Pancreas (tissue), 10 donors: ENCODE measurements at regions of chr14 and their contacts with region 1.

Region 1: DNA sequence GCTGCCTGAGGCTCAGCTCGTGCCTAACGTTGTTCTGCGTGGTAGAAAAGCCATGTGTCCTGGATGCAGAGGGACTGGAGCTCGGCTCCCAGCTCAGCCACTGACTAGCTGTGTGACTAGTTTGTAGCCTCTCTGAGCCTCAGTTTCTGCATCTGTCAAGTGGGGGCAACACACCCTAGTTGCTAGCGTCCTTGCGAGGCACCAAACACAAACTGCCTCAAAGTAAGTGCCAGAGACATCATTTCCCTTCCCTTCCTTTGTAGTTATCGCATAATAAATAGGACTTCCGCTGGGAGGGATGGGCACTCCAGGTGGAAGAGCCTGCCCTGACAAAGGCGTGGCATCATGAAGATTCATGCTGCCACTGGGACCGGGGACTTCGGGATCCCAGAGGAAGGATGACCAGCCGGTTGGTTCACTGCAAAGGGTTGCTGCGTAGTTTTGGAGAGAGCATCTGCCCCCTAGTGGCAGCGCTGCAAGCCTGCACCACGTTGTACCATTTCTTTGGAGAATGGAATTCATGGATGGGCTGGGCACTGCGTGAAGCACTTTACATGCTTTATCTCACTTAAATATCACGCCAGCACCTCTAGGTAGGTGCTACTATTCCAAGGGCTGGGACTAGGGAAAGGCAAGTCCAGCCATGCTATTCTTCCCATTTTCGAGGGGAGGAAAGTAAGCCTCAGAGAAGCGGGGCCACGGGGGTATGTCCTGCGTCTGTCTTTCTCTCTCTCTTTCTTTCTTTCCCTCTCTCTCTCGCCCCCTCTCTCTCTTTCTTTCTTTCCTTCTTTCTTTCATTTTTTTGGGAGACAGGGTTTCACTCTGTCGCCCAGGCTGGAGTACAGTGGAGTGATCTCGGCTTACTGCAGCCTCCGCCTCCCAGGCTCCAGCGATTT is 4.6 kb downstream of the CCDC197 start:
- DNase-seq: peak in 5 of 6 donors; percentile 39 to 74 (median 48)
- ATAC-seq: peak; percentile 89 to 98 (median 93)
- H3K4me3 ChIP-seq: no peak overlapping the region
- H3K27ac ChIP-seq: no peak overlapping the region
- H3K4me1 ChIP-seq: no peaks in the 10 kb centered on the region
- H3K27me3 ChIP-seq: no peaks in the 10 kb centered on the region
- CTCF ChIP-seq: peak; percentile 94 to 98 (median 96)

Region 2: GRCh38 chr14:93939304-93940229 is 62.2 kb before region 1 on chr14:
- intact Hi-C with region 1: loop called in 2 of 3 experiments (anchors 2 to 5 kb)
- DNase-seq: peak; percentile 72 to 97 (median 88)
- ATAC-seq: peak; percentile 76 to 83 (median 80)
- H3K4me3 ChIP-seq: peak overlapping the region in 3 of 4 donors; percentile 14 to 37 (median 18)
- H3K27ac ChIP-seq: peak overlapping the region; percentile 87 to 97 (median 97)
- H3K4me1 ChIP-seq: peaks cover 21 to 28% (median 23%) of the 10 kb centered on the region in 3 donors
- H3K27me3 ChIP-seq: no peaks in the 10 kb centered on the region
- CTCF ChIP-seq: peak; percentile 91 to 94 (median 92)